ENCODE measurements at regions of chr1 and their contacts with region 1.

Region 1: GRCh38 chr1:41268154-41268770 is 26.2 kb upstream of the SCMH1 start:
- DNase-seq: no peak
- H3K4me3 ChIP-seq: no peak overlapping the region
- CTCF ChIP-seq: peak; percentile 93

Region 2: DNA sequence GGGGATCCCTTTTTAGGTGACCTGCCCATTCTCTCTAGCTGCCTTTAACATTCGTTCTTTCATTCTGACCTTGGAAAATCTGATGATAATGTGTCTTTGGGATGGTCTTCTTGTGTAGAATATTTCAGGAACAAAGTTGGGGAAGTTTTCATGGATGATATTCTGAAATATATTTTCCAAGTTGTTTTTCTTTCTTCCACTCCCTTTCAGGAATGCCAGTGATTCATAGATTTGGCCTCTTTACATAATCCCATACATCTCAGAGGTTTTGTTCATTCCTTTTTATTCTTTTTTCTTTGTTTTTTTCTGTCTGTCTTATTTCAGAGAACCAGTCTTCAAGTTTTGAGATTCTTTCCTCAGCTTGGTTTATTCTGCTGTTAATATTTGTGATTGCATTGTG is 12.3 kb before region 1 on chr1:
- CTCF ChIA-PET with region 1: interaction called, 12 read pairs
- POLR2A ChIA-PET with region 1: no interaction called
- DNase-seq: no peak
- H3K4me3 ChIP-seq: no peak overlapping the region
- CTCF ChIP-seq: no peak